Natural killer cell (primary cell): ENCODE measurements at regions of chr20 and their contacts with region 1.

Region 1: DNA sequence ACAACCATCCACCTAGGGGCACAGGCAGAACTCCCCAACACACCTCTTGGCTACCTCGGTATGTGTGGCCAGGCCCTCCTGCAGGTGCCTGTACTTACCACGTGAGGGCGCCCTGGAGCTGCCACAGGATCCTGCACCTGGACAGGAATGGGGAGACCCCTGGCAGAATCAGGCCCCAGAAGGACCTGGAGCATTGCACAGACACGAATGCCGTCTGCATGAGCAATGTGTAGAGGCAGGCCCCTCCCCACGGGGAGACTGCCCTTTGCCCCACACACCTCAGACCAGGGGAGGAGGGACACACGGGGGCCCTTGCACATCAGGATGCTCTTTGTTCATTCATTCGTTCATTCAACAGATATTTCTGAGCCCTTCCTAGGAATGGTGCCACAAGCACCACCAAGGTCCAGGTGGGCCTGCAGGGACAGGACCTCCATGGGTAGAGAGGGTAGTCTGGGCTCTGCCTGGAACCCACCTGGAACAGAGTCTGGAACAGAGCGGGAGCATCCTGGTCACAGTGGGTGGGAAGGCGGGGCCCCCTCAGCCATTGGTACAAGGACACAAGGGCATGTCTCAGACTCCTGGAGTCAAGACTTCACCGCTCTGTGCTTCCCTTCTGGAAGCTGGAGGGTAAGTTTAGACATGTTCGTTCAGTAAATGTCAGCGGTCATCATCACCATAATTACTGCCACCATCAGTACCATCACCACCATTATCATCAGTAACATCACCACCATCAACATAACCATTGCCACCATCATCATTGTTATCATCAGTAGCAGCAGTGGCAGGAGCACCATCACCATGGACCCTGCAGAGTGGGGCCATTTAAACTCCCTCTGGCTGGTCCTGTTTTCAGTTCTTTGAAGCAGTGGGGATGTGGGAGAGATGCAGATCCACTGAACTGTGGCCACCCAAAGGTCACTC is 32.2 kb downstream of the YTHDF1 start:
- DNase-seq: peak in 1 of 2 donors; percentile 63
- ATAC-seq: peak in 2 of 3 donors; percentile 21 to 32
- H3K4me3 ChIP-seq: no peak overlapping the region
- H3K4me3 Mint-ChIP-seq: no peak overlapping the region
- H3K27ac ChIP-seq: no peak overlapping the region
- H3K27ac Mint-ChIP-seq: no peak overlapping the region
- H3K4me1 ChIP-seq: peaks cover 12% of the 10 kb centered on the region
- H3K4me1 Mint-ChIP-seq: peaks cover 0 to 13% of the 10 kb centered on the region in 2 donors
- H3K27me3 ChIP-seq: peaks cover 8% of the 10 kb centered on the region
- H3K27me3 Mint-ChIP-seq: peaks cover 8 to 14% of the 10 kb centered on the region in 2 donors
- CTCF ChIP-seq: peak; percentile 62

Region 2: DNA sequence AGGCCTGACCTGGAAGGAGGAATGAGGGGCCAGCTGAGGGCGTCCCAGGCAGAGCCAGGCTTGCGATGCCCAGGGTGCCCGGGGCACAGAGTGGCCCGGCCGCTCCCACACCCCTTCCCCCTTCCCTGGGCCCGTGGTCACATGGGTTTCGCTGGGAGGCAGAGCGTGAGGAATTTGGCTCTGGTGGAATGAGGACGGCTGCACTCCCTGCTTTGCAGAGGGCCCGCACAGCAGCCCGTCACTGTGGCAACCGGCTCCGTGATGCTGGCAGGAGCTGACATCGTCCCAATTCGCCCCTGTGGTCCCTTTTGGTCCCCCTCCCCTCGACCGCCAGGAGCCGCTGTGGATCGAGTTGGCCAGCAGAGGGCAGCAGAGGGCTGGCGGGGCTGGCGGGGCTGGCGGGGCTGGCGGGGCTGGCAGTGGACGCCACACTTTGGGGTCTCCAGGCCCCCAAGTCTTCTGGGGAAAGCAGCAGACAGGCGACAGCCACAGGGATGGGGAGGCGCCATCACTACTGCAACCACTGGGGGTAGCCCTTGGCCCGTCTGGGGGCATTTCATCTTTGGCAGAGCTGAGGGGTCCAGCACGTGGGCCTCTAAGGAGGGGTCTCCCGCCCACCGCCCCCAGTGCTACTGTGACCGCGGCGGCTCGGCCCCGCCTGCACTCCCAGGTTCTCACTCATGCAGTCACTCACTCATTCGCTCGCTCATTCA is 127.3 kb before region 1 on chr20:
- intact Hi-C with region 1: loop called (anchors 5 kb)
- DNase-seq: peak; percentile 42 to 60
- ATAC-seq: peak; percentile 61 to 84 (median 80)
- H3K4me3 ChIP-seq: no peak overlapping the region
- H3K4me3 Mint-ChIP-seq: no peak overlapping the region
- H3K27ac ChIP-seq: no peak overlapping the region
- H3K27ac Mint-ChIP-seq: no peak overlapping the region
- H3K4me1 ChIP-seq: peaks cover 7% of the 10 kb centered on the region
- H3K4me1 Mint-ChIP-seq: no peaks in the 10 kb centered on the region
- H3K27me3 ChIP-seq: no peaks in the 10 kb centered on the region
- H3K27me3 Mint-ChIP-seq: peaks cover 0 to 10% of the 10 kb centered on the region in 2 donors
- CTCF ChIP-seq: peak; percentile 92

Region 3: DNA sequence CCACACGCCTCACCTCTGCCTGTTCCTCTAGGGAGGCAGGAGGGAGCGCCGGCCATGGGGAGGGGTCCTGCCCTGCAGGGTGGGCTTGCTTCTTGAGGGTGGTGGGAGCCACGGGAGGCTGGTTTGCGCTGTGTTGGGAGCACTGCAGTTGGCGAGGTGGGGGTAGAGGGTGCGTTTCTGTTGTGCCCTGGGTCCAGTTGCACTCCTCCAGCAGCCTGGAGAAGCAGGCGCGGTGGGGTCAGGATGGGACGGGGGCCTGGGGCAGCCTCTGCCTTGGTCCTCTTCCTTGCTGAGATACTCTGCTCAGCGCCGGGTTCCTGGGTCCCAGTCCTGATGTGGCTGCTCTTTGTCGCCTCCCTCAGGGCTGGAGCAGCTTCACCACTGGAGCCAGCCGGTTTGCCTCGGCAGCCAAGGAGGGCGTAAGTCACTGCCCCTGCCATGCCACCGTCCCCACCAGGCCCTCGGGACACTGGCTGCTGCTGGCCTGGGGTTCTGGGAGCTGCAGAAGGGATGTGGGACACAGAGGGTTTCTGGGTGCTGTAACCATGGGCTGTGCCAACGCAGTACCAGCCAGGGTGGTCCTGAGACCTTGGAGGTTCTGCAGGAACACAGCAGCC is 97.4 kb after region 1 on chr20:
- intact Hi-C with region 1: no loop called
- DNase-seq: no peak
- ATAC-seq: no peak
- H3K4me3 ChIP-seq: no peak overlapping the region
- H3K4me3 Mint-ChIP-seq: no peak overlapping the region
- H3K27ac ChIP-seq: no peak overlapping the region
- H3K27ac Mint-ChIP-seq: no peak overlapping the region
- H3K4me1 ChIP-seq: no peaks in the 10 kb centered on the region
- H3K4me1 Mint-ChIP-seq: peaks cover 0 to 4% of the 10 kb centered on the region in 2 donors
- H3K27me3 ChIP-seq: no peaks in the 10 kb centered on the region
- H3K27me3 Mint-ChIP-seq: no peaks in the 10 kb centered on the region
- CTCF ChIP-seq: no peak

Region 4: DNA sequence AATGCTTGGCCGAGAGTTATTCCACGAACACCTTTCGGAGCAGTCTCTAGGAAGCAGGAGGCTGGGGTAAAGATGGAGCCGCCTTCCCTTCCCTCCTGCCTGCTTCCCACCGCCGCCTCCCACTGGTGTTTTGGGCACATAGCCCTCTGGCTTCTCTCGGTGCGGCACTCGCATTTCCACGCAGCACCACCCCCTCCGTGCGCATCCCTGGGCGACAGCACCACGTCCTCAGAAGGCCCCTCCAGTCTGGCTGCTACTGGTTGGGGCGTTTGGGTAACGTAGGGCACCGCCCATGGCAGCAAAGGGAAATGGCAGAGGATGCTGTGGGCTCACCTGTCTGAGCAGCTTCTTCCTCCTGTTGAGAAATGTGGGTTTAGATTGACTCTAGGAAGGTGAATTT is 111.7 kb after region 1 on chr20:
- intact Hi-C with region 1: no loop called
- DNase-seq: peak in 1 of 2 donors; percentile 47
- ATAC-seq: no peak
- H3K4me3 ChIP-seq: no peak overlapping the region
- H3K4me3 Mint-ChIP-seq: no peak overlapping the region
- H3K27ac ChIP-seq: no peak overlapping the region
- H3K27ac Mint-ChIP-seq: no peak overlapping the region
- H3K4me1 ChIP-seq: peaks cover 5% of the 10 kb centered on the region
- H3K4me1 Mint-ChIP-seq: no peaks in the 10 kb centered on the region
- H3K27me3 ChIP-seq: no peaks in the 10 kb centered on the region
- H3K27me3 Mint-ChIP-seq: peaks cover 4 to 8% of the 10 kb centered on the region in 2 donors
- CTCF ChIP-seq: no peak